OCI-LY7 (cell line): ENCODE measurements at regions of chr12 and their contacts with region 1.

Region 1: DNA sequence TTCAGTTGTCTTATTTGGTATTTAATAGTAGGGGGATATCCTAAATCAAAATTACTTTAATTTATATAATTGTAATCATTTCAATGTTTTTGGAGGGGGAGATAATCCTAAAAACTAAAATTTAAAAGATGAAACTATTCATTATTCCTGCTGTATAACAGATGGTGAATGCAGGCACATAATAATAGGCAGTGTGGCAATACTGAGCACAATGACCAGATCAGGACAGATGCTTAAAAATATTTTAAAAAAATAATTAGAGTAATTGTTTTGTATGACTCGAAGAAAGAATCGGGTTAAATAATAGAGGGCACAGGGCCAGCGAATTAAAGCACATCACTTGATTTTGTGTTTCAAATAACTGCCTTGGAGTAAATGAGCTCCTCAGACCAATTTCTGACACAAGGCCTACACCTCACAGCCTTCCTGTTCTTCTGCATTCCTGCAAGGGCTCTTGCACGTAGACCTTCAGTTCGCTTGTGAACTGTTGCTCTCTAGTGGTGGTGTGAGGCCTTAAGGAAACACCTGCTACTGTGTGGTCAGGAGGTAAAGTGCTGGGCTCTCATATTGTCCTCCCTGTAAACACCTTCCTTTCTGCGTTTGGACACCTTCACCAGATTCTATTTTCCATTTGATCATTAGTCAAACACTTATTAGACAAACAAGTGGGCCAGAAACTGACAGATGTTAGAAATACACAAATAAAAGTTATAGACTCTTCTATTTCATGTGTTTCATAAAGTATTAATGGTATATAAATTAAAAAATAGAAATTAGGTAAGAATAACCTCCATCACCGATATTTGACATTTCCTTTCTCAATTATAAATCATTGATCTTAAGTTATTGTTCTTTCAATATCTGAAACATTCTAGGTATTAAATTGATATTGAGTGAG is 29.3 kb upstream of the KLRF1 start:
- DNase-seq: peak; percentile 90
- H3K4me3 ChIP-seq: no peak overlapping the region
- H3K27ac ChIP-seq: no peak overlapping the region
- H3K4me1 ChIP-seq: peaks cover 26% of the 10 kb centered on the region
- CTCF ChIP-seq: peak; percentile 91

Region 2: DNA sequence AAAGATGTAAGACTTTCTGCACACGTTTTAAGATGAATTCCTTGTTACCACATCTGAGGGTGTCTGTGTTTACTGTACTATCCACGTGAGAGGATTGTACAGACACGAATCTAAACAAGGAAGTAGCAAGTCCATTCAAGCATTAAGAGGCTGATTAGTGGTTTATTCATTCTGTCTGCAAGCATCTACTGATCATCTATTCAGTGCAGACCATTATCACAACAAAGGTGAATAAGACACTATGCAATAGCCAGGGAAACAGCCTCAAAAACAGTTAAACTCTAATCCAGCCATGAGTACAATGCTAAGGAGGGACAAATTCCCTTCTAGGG is 478.2 kb before region 1 on chr12:
- CTCF ChIA-PET with region 1: no interaction called
- POLR2A ChIA-PET with region 1: no interaction called
- intact Hi-C with region 1: loop called (anchors 10 kb)
- DNase-seq: peak; percentile 24
- H3K4me3 ChIP-seq: peak overlapping the region; percentile 23
- H3K27ac ChIP-seq: peak overlapping the region; percentile 39
- H3K4me1 ChIP-seq: peaks cover 13% of the 10 kb centered on the region
- CTCF ChIP-seq: no peak

Region 3: GRCh38 chr12:9634177-9634803 is 163.7 kb before region 1 on chr12:
- CTCF ChIA-PET with region 1: no interaction called
- POLR2A ChIA-PET with region 1: interaction called, 3 read pairs
- intact Hi-C with region 1: loop called (anchors 5 kb)
- DNase-seq: peak; percentile 83
- H3K4me3 ChIP-seq: no peak overlapping the region
- H3K27ac ChIP-seq: peak overlapping the region; percentile 22
- H3K4me1 ChIP-seq: peaks cover 32% of the 10 kb centered on the region
- CTCF ChIP-seq: peak; percentile 100